Mammary epithelial cell (primary cell): ENCODE measurements at regions of chr5 and their contacts with region 1.

Region 1: DNA sequence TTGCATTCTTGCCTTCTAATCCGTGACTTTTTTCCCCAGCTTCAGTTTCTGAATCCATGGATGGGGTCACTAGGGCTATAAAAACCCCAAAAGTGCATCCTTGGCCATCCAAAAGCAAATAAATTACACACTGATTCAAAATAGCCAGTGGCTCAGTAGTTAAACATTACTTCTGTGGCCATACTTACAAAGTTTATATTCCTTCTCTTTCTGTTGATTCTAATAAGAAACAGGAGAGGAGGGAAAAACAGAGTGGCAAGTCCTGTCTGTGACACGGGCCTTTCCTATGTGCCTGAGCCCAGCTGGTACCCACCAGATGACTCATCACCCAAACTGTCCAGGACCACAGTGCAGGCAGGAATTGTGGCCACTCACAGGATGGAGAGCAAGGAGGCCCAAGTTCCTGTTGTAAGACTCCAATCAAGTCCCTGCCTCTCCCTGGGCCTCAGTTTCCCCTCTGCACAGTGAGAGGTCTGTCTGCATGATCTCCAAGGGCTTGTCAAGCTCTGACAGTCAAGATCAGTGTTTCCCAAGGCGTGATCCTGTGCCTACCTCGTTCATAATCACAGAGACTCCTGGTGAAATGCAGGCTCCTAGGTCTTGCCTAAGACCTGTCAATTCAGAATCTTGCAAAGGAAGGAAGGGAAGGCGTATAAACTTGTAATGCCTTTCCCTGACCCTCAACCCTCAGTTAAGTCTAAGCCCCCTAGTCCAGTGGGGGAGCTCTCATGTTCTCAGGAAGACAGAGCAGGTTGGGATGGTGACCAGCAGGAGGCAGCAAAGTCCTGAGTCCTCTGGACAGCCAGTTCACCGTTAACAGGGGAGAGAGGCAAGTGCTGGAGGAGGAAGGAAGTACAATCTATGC is 29.5 kb downstream of the TNIP1 start:
- DNase-seq: peak; percentile 51
- H3K4me3 ChIP-seq: no peak overlapping the region
- H3K27ac ChIP-seq: no peak overlapping the region
- H3K4me1 ChIP-seq: no peaks in the 10 kb centered on the region
- H3K27me3 ChIP-seq: no peaks in the 10 kb centered on the region
- CTCF ChIP-seq: peak; percentile 83 to 85

Region 2: DNA sequence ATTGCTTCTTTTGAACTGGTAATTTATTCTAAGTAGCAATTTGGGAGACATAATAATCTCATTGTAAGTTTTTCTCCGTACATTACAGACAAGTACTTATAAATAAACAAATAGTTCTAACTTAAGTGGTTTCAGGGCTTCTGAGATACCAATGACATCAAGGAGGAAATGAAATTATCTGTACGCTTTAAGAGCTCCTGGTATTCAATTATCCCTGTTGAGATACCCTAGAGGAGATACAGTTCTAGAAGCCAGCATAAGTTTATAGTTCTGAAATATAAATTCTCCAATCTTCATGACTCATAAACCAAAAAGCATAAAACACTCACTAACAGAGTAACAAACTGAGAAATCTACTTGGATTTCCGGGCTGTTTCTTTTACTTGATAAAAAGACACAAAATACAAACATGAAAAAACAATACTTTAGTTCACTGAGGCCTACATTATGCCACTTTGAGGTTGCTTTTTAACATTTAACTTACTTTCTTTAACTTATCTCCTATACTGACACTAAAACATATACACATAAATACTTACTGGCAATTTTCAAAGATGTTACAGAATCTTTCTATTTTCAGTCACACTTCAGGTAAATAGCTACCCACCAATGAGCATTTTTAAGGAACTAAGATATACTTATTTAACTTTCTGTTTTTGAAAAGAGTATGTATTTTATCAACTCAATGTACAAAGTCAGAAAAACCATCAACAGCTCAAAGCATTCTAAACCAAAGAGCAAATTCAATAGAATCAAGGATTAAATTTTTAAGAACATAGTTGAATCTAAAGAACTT is 300.0 kb before region 1 on chr5:
- CTCF ChIA-PET with region 1: no interaction called
- dilution Hi-C with region 1: no loop called
- in situ Hi-C with region 1: no loop called
- intact Hi-C with region 1: no loop called
- DNase-seq: no peak
- H3K4me3 ChIP-seq: no peak overlapping the region
- H3K27ac ChIP-seq: no peak overlapping the region
- H3K4me1 ChIP-seq: no peaks in the 10 kb centered on the region
- H3K27me3 ChIP-seq: no peaks in the 10 kb centered on the region
- CTCF ChIP-seq: no peak

Region 3: DNA sequence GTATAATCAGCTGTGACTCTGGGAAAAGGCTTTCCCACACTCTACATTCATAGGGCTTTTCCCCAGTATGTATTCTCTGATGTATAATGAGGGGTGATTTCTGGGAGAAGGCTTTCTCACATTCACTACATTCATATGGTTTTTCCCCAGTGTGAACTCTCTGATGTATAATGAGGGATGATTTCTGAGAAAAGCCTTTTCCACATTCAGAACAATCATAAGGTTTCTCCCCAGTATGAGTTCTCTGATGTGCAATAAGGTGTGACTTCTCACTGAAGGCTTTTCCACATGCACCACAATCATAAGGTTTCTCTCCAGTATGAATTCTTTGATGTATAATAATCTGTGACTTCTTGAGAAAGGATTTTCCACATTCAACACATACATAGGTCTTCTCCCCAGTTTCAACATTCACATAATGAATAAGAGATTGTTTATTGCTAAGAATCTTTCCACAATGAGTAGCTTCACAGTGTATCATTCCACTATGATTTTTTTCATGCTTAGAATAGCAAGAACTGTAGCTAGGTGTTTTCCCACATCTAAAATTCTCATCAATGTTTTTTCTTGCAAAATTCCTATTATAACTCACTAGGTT is 119.8 kb before region 1 on chr5:
- CTCF ChIA-PET with region 1: no interaction called
- dilution Hi-C with region 1: no loop called
- in situ Hi-C with region 1: no loop called
- intact Hi-C with region 1: no loop called
- DNase-seq: no peak
- H3K4me3 ChIP-seq: no peak overlapping the region
- H3K27ac ChIP-seq: no peak overlapping the region
- H3K4me1 ChIP-seq: no peaks in the 10 kb centered on the region
- H3K27me3 ChIP-seq: no peaks in the 10 kb centered on the region
- CTCF ChIP-seq: no peak

Region 4: DNA sequence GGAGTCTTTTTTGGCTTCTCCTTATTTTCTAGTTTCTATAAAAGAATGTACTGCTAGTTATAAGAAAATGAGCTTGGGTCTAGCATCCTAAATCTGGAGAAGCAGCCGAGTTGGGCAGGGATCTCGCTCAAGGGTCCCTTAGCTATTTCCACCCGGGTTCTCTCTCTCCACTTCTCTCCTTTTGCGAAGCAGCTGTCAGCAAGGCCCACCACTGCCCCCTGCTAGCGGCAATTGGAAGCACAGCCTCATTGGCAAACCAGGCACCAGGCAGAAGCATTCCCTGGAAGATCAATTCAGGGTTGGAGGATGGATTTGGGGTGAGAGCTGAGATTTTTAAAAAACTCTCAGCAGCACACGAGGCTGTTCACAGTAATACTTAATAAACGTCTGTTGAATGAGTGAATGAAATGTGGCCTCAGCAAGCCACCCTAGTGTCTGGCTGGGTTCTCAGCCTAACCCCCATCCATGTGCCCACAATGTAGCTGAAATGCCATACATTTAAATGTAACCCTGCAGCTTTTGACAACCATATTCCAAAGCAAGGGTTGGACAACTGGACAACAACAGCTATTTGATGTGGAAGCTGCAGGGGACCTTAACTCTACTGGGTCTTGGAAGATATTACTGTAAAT is 64.1 kb after region 1 on chr5:
- CTCF ChIA-PET with region 1: interaction called, 6 read pairs
- dilution Hi-C with region 1: no loop called
- in situ Hi-C with region 1: loop called (anchors 5 kb)
- intact Hi-C with region 1: loop called (anchors 1 kb)
- DNase-seq: peak; percentile 32
- H3K4me3 ChIP-seq: no peak overlapping the region
- H3K27ac ChIP-seq: no peak overlapping the region
- H3K4me1 ChIP-seq: no peaks in the 10 kb centered on the region
- H3K27me3 ChIP-seq: no peaks in the 10 kb centered on the region
- CTCF ChIP-seq: peak; percentile 99

Region 5: DNA sequence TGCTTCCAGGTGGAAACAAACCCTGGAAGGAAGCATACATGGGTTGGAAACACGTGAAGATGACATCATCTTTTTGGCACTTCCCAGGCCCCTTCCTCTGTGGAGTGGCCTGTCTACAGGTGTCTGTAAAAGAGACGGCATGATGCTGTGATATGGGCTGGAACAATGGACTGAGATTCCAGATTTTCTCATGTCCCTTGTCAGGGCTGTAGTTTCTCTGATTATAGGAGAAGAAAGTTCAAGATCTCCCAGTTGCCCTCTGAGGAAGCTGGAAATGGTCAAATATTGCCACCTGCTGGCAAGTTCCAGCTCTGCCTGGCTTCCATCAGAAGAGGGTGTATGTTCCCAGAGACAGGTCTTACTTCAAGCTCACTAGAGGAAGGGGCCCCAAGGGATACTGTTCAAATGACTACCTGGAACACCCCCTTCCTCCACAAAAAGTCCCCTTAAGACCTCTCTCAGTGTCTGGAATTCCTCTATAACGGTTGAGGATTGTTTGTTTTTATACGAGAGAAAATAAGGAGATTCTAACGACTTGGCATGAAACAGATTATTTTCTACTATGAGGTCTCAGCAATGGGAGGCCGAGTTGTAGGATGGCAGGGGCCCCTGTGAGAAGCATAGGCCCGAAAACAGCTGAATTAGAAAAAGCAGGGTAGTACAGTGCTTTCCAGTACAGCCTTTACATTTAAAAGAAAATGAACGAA is 113.5 kb after region 1 on chr5:
- CTCF ChIA-PET with region 1: no interaction called
- dilution Hi-C with region 1: no loop called
- in situ Hi-C with region 1: no loop called
- intact Hi-C with region 1: loop called (anchors 2 kb)
- DNase-seq: peak; percentile 60
- H3K4me3 ChIP-seq: no peak overlapping the region
- H3K27ac ChIP-seq: no peak overlapping the region
- H3K4me1 ChIP-seq: no peaks in the 10 kb centered on the region
- H3K27me3 ChIP-seq: peaks cover 3% of the 10 kb centered on the region
- CTCF ChIP-seq: peak; percentile 96